ENCODE measurements at regions of chr3 and their contacts with region 1.

Region 1: DNA sequence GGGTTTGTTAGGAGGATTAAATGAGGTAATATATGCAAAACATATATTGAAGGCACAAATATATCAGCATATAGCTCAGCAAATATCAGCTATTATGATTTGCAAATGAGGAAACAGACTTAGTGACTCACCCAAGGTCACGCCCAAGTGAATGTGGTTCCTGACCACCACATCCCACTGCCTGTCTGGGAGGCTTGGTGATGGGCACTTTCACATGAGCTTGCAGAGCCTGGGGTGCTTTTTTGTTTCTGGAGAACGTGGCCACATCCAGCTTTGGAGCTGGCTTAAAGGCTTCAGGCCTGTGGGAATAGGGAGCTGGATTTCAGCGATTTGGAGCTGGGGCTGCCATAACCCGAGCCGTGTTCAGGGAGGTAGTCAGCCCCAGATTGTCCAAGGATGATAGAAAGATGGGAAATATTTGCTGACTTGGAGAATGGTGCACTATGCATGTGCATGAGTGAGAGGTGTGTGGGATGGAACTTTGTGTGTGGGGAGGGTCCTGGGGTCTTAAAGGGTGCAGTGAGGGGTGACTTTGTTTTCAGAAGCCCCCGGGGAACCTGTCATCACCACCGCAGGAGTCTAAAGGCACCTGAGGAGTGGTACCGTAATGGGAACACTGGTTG is 12.0 kb upstream of the FGD5 start:
- DNase-seq: no peak

Region 2: DNA sequence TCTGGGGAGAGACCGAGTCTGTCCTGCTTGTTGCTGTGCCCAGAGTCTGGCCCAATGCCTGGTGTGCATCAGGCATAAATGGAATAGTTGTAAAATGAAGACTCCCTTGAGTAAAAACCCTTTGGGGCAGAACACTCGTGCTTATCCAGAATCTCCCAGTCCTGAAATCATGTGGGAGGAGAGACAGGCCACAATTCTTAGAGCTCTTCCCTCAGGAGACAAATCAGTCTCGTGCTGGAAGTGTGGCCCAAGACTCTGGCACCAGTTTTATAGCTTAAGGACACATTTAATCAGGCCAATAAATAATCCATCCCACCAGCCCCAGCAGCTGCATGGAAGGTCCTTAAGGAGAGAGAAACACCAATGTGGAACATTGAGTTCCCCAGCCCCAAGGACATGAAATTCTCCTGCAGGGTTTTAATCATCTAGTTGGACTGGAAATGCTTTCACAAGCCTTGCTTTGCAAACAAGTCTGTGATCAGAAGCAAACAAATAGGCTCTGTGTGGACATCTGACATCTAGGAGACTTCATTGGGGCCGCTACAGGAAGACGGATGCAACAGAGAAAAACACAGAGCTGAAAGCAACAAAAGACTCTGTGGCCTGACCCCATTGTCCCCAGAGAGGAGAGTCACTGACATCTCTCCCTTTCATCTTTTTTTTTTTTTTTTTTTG is 557.8 kb before region 1 on chr3:
- intact Hi-C with region 1: no loop called
- DNase-seq: peak; percentile 36

Region 3: DNA sequence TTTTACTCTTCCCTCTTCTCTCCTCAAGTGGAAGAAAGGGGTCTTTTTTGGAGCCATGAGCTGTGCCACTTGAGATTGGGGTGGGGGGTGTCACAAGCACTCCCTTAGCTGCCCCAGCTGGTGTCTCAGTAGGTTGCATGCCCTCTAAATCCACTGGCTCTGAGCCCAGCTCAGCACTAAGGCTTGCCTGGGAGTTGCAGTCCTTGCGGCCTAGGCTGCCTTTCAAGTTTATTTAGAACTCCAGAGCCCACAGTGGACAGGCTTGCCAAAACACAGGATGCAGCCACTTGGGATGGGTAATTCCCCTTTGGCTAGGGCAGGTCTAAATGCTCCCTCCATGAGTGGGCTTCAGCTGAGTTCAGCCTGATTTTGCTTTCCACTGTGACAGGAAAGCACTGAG is 107.1 kb before region 1 on chr3:
- intact Hi-C with region 1: no loop called
- DNase-seq: no peak

Region 4: GRCh38 chr3:14791343-14791945 is 15.3 kb before region 1 on chr3:
- intact Hi-C with region 1: loop called (anchors 2 kb)
- DNase-seq: peak; percentile 83

Region 5: GRCh38 chr3:14863333-14864100 is 56.8 kb after region 1 on chr3:
- intact Hi-C with region 1: loop called (anchors 5 kb)
- DNase-seq: no peak

Region 6: GRCh38 chr3:14907043-14907966 is 100.6 kb after region 1 on chr3:
- intact Hi-C with region 1: loop called (anchors 5 kb)
- DNase-seq: no peak

Region 7: DNA sequence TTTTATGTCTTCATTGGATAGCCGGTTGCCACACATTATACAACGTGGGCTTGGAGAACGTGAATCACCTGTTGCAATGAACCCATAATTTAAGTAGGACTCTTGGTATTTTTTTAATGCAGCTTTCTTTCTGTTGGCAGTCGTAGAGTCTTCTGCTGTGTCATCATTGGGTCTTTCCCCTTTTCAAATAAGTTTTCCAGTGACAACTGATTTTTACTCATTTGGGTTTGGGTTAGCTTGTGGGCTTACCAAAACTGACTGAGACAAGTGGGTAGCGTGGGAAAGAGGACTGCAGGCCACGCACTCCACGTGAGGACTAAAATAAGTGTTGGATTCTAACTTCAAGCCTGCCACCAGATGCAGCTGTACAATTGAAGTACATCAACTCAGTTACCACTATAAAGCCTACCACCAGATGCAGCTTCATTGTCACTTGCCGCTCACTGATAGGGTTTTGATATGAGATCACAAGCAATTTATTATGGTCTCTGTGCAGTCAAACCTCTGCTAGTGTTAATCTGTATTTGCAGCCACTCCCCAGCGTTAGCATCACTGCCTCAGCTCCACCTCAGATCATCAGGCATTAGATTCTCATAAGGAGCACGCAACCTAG is 392.8 kb after region 1 on chr3:
- intact Hi-C with region 1: no loop called
- DNase-seq: no peak